ENCODE measurements at regions of chrX and their contacts with region 1.

Region 1: DNA sequence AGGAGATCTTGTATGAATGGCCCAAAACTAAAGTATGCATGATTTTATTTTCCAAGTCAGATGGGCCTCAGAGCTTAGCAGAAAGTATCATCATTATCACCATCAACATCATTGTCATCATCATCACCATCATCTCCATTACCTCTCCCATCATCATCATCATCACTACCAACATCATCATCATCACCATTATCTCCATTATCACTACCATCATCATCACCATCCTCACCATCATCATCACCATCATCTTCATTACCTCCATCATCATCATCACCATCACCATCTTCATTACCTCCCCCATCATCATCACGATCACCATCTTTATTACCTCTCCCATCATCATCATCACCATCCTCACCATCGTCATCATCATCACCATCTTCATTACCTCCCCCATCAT is 363.9 kb downstream of the DHRSX start:
- DNase-seq: no peak
- ATAC-seq: no peak
- H3K4me3 ChIP-seq: no peak overlapping the region
- H3K27ac ChIP-seq: no peak overlapping the region
- H3K4me1 ChIP-seq: no peaks in the 10 kb centered on the region
- H3K27me3 ChIP-seq: no peaks in the 10 kb centered on the region
- CTCF ChIP-seq: no peak
- EP300 ChIP-seq: no peak
- POLR2A ChIP-seq: no peak
- RAD21 ChIP-seq: no peak

Region 2: GRCh38 chrX:1453951-1454785 is 682.7 kb before region 1 on chrX:
- CTCF ChIA-PET with region 1: no interaction called
- POLR2A ChIA-PET with region 1: no interaction called
- in situ Hi-C with region 1: no loop called
- intact Hi-C with region 1: no loop called
- DNase-seq: peak; percentile 64 to 84 (median 67)
- ATAC-seq: peak; percentile 74
- H3K4me3 ChIP-seq: no peak overlapping the region
- H3K27ac ChIP-seq: no peak overlapping the region
- H3K4me1 ChIP-seq: peaks cover 0 to 13% of the 10 kb centered on the region in 2 experiments; a peak in 2 of 5 replicates
- H3K27me3 ChIP-seq: peaks cover 0 to 17% of the 10 kb centered on the region in 2 experiments; a peak in 2 of 5 replicates
- CTCF ChIP-seq: peak; percentile 74 to 85 (median 78)
- EP300 ChIP-seq: no peak
- POLR2A ChIP-seq: no peak
- RAD21 ChIP-seq: peak; percentile 84 to 86

Region 3: GRCh38 chrX:1686642-1687041 is 450.2 kb before region 1 on chrX:
- CTCF ChIA-PET with region 1: no interaction called
- POLR2A ChIA-PET with region 1: no interaction called
- in situ Hi-C with region 1: loop called (anchors 10 kb)
- intact Hi-C with region 1: no loop called
- DNase-seq: no peak
- ATAC-seq: no peak
- H3K4me3 ChIP-seq: no peak overlapping the region
- H3K27ac ChIP-seq: no peak overlapping the region
- H3K4me1 ChIP-seq: no peaks in the 10 kb centered on the region
- H3K27me3 ChIP-seq: no peaks in the 10 kb centered on the region
- CTCF ChIP-seq: no peak
- EP300 ChIP-seq: no peak
- POLR2A ChIP-seq: no peak
- RAD21 ChIP-seq: no peak

Region 4: GRCh38 chrX:1941321-1941720 is 195.5 kb before region 1 on chrX:
- CTCF ChIA-PET with region 1: no interaction called
- POLR2A ChIA-PET with region 1: no interaction called
- in situ Hi-C with region 1: loop called (anchors 5 kb)
- intact Hi-C with region 1: no loop called
- DNase-seq: no peak
- ATAC-seq: no peak
- H3K4me3 ChIP-seq: no peak overlapping the region
- H3K27ac ChIP-seq: no peak overlapping the region
- H3K4me1 ChIP-seq: no peaks in the 10 kb centered on the region
- H3K27me3 ChIP-seq: no peaks in the 10 kb centered on the region; a peak in 1 of 5 replicates
- CTCF ChIP-seq: no peak
- EP300 ChIP-seq: no peak
- POLR2A ChIP-seq: no peak
- RAD21 ChIP-seq: no peak